Mammary epithelial cell (primary cell): ENCODE measurements at regions of chr10 and their contacts with region 1.

Region 1: GRCh38 chr10:103491493-103492381 is 1.8 kb upstream of the NEURL1 start:
- DNase-seq: peak; percentile 84
- H3K4me3 ChIP-seq: no peak overlapping the region
- H3K27ac ChIP-seq: peak overlapping the region; percentile 40
- H3K4me1 ChIP-seq: peaks cover 40% of the 10 kb centered on the region
- H3K27me3 ChIP-seq: no peaks in the 10 kb centered on the region
- CTCF ChIP-seq: no peak

Region 2: DNA sequence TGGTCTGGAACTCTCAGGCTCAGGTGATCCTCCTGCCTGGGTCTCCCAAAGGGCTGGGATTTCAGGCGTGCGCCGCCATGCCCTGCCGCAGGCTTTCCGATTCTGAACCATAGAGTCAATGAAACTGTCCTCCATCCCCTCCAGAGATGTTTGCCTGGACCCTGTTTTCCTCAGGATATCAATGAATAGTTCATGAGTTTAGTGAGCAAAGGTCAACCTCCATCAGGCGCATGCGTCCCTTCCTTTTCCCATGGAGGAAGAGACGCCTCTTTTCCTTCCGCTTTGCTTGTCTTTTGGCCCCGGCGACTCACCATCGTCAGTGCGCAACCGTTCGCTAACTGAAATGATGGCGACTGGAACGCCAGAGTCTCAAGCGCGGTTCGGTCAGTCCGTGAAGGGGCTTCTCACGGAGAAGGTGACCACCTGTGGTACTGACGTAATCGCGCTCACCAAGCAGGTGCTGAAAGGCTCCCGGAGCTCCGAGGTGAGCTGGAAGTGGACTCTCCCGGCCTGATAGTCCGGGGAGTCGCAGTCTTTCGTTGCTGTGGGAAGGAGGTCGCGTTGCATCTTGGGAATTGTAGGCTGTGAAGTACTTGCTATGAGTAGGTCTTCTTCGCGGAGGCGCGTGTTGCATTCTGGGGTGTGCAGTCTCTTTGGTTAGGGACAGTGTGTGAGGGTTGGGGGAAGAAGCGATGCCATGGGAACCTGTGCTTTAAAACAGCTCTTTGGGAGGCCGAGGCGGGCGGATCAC is 637.6 kb before region 1 on chr10 and contains the start of gene BORCS7:
- CTCF ChIA-PET with region 1: no interaction called
- dilution Hi-C with region 1: no loop called
- in situ Hi-C with region 1: no loop called
- intact Hi-C with region 1: no loop called
- DNase-seq: peak; percentile 96
- H3K4me3 ChIP-seq: peak within 1 kb of the TSS; percentile 69 to 88 (median 70)
- H3K27ac ChIP-seq: peak within 1 kb of the TSS; percentile 83
- H3K4me1 ChIP-seq: peaks cover 7% of the 10 kb centered on the region
- H3K27me3 ChIP-seq: no peaks in the 10 kb centered on the region
- CTCF ChIP-seq: no peak
- total RNA-seq, gene BORCS7: 10.8 to 18.3 TPM

Region 3: GRCh38 chr10:103396064-103396788 is 95.5 kb before region 1 on chr10 and contains the starts of genes ATP5MK and PDCD11:
- CTCF ChIA-PET with region 1: no interaction called
- dilution Hi-C with region 1: loop called (anchors 5 kb)
- in situ Hi-C with region 1: no loop called
- intact Hi-C with region 1: no loop called
- DNase-seq: peak; percentile 99
- H3K4me3 ChIP-seq: peak within 1 kb of the TSS; percentile 68 to 91 (median 86)
- H3K27ac ChIP-seq: peak within 1 kb of the TSS; percentile 69
- H3K4me1 ChIP-seq: peaks cover 9% of the 10 kb centered on the region
- H3K27me3 ChIP-seq: no peaks in the 10 kb centered on the region
- CTCF ChIP-seq: peak in 1 of 2 donors; percentile 40
- total RNA-seq, gene ATP5MK: 152 to 387 TPM
- total RNA-seq, gene PDCD11: 53.2 to 77.1 TPM

Region 4: DNA sequence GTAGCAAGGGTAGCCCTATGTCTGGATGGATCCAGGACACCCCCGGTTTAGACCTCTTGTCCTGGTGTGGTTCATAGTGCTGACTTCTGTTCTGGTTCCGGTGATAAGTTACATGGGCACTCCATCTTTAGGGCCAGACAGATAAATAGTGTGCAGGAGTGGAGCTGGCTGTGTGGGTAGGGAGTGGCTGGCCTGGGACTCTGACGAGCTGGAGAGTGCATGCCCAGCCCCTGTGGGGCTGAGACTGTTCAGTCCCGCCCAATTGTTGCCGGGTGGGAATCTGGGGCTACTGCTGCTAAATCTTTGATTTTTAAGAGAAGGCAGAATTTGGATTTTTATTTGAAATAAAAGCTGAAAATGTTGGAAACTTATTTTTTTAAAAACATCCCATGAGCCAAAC is 68.0 kb before region 1 on chr10:
- CTCF ChIA-PET with region 1: no interaction called
- dilution Hi-C with region 1: loop called (anchors 5 kb)
- in situ Hi-C with region 1: no loop called
- intact Hi-C with region 1: no loop called
- DNase-seq: no peak
- H3K4me3 ChIP-seq: no peak overlapping the region
- H3K27ac ChIP-seq: no peak overlapping the region
- H3K4me1 ChIP-seq: no peaks in the 10 kb centered on the region
- H3K27me3 ChIP-seq: no peaks in the 10 kb centered on the region
- CTCF ChIP-seq: no peak

Region 5: GRCh38 chr10:103451831-103452505 is 39.8 kb before region 1 on chr10 and contains the start of gene CALHM2:
- CTCF ChIA-PET with region 1: no interaction called
- dilution Hi-C with region 1: loop called (anchors 5 kb)
- in situ Hi-C with region 1: no loop called
- intact Hi-C with region 1: no loop called
- DNase-seq: peak; percentile 27
- H3K4me3 ChIP-seq: peak within 1 kb of the TSS; percentile 47 to 54 (median 53)
- H3K27ac ChIP-seq: no peak within 1 kb of the TSS
- H3K4me1 ChIP-seq: peaks cover 32% of the 10 kb centered on the region
- H3K27me3 ChIP-seq: no peaks in the 10 kb centered on the region
- CTCF ChIP-seq: no peak
- total RNA-seq, gene CALHM2: 3.2 to 4.8 TPM

Region 6: GRCh38 chr10:103528556-103528955 is 36.8 kb after region 1 on chr10:
- CTCF ChIA-PET with region 1: interaction called, 8 read pairs
- dilution Hi-C with region 1: loop called (anchors 5 kb)
- in situ Hi-C with region 1: no loop called
- intact Hi-C with region 1: no loop called
- DNase-seq: no peak
- H3K4me3 ChIP-seq: no peak overlapping the region
- H3K27ac ChIP-seq: peak overlapping the region; percentile 94
- H3K4me1 ChIP-seq: peaks cover 16% of the 10 kb centered on the region
- H3K27me3 ChIP-seq: no peaks in the 10 kb centered on the region
- CTCF ChIP-seq: no peak

Region 7: GRCh38 chr10:103542764-103543616 is 51.3 kb after region 1 on chr10:
- CTCF ChIA-PET with region 1: no interaction called
- dilution Hi-C with region 1: no loop called
- in situ Hi-C with region 1: no loop called
- intact Hi-C with region 1: loop called (anchors 5 kb)
- DNase-seq: peak; percentile 25
- H3K4me3 ChIP-seq: peak overlapping the region in 2 of 3 experiments; percentile 29 to 31
- H3K27ac ChIP-seq: no peak overlapping the region
- H3K4me1 ChIP-seq: peaks cover 6% of the 10 kb centered on the region
- H3K27me3 ChIP-seq: peaks cover 3% of the 10 kb centered on the region
- CTCF ChIP-seq: peak; percentile 28 to 52

Region 8: DNA sequence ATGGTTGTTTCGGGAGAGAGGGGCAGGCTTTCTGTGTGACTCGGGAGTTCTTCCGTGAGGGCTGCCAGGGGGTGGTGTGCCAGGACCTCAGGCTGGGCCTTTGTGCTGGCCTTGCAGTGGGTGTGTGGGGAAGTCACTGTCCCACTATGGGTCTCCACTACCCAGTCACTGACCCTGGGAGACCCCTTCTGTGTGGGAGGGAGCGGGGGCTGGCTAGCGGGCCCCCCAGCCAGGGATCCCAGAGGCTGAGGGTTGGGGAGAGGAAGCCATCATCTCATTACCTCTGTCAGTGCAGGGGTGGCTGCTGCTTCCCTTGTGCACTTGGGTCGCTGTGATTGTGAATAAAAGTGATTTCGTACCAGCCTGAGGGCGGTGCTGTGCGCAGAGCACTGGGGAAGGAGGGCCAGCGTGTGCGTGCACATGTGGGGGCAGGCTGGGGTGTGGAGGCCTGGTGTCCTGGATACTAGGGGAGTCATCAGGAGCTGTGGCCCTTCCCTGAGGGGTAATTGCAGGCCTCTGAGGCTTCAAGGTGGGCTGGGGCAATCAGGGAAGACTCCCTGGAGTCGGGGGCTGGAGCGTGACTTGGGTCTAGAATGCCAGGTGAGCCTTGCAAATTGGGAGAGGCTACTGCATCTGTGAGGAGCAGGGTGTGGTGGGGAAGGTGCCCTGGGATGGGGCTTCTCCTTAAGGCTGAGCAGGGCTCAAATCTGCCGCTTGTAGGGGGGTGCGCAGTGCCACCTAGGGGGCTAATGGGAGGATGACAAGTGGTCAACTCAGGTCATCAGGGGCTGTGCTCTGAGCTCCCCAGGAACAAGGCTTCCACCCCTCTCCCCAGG is 100.7 kb after region 1 on chr10:
- CTCF ChIA-PET with region 1: no interaction called
- dilution Hi-C with region 1: no loop called
- in situ Hi-C with region 1: no loop called
- intact Hi-C with region 1: loop called (anchors 5 kb)
- DNase-seq: no peak
- H3K4me3 ChIP-seq: no peak overlapping the region
- H3K27ac ChIP-seq: no peak overlapping the region
- H3K4me1 ChIP-seq: no peaks in the 10 kb centered on the region
- H3K27me3 ChIP-seq: no peaks in the 10 kb centered on the region
- CTCF ChIP-seq: peak; percentile 56 to 58